Activated T-helper 2 cell treated with anti-CD3 and anti-CD28 coated beads, Interferon-gamma antibody, Interleukin-2, Interleukin-4, amounts not matched to agents 10 μg/mL and 5 μg/mL and 100 μg/mL, durations not matched to agents 14 hours and 24 hours and 36 hours (primary cell): ENCODE measurements at regions of chr20 and their contacts with region 1.

Region 1: GRCh38 chr20:38748097-38748860 is at the start of gene ACTR5:
- DNase-seq: peak; percentile 94
- H3K4me3 Mint-ChIP-seq: peak within 1 kb of the TSS; percentile 93
- H3K27ac Mint-ChIP-seq: peak within 1 kb of the TSS; percentile 95
- H3K4me1 Mint-ChIP-seq: peaks cover 22% of the 10 kb centered on the region
- H3K27me3 Mint-ChIP-seq: peaks cover 6% of the 10 kb centered on the region
- total RNA-seq, gene ACTR5: 12.1 and 13.2 TPM in 2 replicates

Region 2: GRCh38 chr20:38590676-38591471 is 157.4 kb before region 1 on chr20:
- intact Hi-C with region 1: no loop called
- DNase-seq: no peak
- H3K4me3 Mint-ChIP-seq: no peak overlapping the region
- H3K27ac Mint-ChIP-seq: no peak overlapping the region
- H3K4me1 Mint-ChIP-seq: no peaks in the 10 kb centered on the region
- H3K27me3 Mint-ChIP-seq: peaks cover 3% of the 10 kb centered on the region

Region 3: DNA sequence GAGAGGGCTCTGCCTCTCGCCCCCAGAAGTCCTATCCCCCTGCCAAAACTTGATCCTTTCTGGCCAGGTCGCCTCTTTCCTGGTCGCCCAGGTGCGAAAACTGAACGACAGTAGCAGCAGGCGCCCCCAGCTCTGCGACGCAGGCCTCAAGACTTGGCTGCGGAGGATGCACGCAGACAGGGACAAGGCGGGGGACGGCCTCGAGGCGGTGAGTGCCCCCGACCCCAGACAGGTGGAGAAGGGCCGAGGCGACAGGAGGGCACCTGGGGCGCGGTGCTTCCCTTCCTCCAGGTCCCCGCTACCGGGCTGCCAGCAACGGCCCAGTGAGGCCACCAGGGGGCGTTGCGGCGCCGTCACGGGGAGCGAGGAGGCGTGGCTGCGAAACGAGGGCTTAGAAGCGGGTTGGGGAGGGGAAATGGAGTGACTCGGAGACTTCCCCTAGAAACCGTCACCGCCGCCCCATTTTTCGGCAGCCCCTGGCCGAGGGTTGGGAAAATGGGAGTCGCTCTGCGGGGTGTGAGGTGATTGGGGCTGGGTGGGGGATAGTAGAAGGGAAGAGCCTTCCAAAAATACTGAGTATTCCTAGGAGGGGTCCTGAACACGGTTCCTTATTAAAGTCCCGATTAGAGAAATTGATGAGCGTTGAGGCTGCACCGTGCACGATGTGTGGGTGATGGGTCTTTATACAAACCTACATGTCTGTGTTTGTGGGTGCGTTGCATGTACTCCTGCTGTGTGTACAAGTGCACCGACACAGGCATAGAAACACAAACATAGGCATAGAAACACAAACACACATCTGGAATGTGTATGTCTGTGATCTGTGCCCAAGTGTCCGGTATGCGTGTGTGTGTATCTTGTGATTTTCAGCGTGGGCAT is 102.1 kb before region 1 on chr20:
- intact Hi-C with region 1: loop called (anchors 1 kb)
- DNase-seq: peak; percentile 87
- H3K4me3 Mint-ChIP-seq: peak overlapping the region; percentile 77
- H3K27ac Mint-ChIP-seq: peak overlapping the region; percentile 23
- H3K4me1 Mint-ChIP-seq: peaks cover 7% of the 10 kb centered on the region
- H3K27me3 Mint-ChIP-seq: peaks cover 33% of the 10 kb centered on the region

Region 4: DNA sequence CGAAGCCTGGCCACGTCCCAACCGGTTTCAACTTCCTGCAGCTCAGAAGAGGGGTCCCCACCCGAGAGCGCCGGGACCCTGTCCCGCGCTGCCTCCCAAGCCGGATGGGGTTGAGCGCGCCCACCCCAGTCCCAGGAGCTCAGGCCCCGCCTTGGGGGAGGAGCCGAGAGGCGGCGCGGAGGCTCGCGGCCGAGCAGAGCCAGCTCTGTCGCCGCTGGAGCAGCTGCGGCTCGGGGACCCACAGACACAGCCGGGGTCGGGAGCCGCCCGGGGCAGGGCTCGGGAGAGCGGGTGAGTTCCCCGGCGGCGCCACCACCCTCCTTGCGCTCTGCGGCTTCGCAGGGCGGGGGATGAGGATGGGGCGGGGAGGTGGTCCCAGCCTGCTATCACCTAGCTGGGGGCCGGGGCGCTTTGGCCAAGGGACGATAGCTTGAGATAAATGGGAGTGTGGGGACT is 57.3 kb after region 1 on chr20 and contains the start of gene PPP1R16B:
- intact Hi-C with region 1: loop called (anchors 1 kb)
- DNase-seq: peak; percentile 78
- H3K4me3 Mint-ChIP-seq: peak within 1 kb of the TSS; percentile 91
- H3K27ac Mint-ChIP-seq: peak within 1 kb of the TSS; percentile 98
- H3K4me1 Mint-ChIP-seq: peaks cover 48% of the 10 kb centered on the region
- H3K27me3 Mint-ChIP-seq: no peaks in the 10 kb centered on the region
- total RNA-seq, gene PPP1R16B: 109 and 111 TPM in 2 replicates